Panc1 (cell line): ENCODE measurements at regions of chr2 and their contacts with region 1.

Region 1: GRCh38 chr2:102072741-102073140 is 69.8 kb upstream of the IL1R1 start:
- DNase-seq: no peak
- ATAC-seq: no peak
- H3K4me3 ChIP-seq: no peak overlapping the region
- H3K27ac ChIP-seq: no peak overlapping the region
- H3K4me1 ChIP-seq: no peaks in the 10 kb centered on the region
- H3K27me3 ChIP-seq: no peaks in the 10 kb centered on the region
- CTCF ChIP-seq: no peak

Region 2: GRCh38 chr2:102050854-102051391 is 21.8 kb before region 1 on chr2:
- CTCF ChIA-PET with region 1: no interaction called
- POLR2A ChIA-PET with region 1: no interaction called
- in situ Hi-C with region 1: no loop called
- intact Hi-C with region 1: no loop called
- DNase-seq: no peak
- ATAC-seq: no peak
- H3K4me3 ChIP-seq: no peak overlapping the region
- H3K27ac ChIP-seq: no peak overlapping the region
- H3K4me1 ChIP-seq: no peaks in the 10 kb centered on the region
- H3K27me3 ChIP-seq: peaks cover 4% of the 10 kb centered on the region; the same call in 1 of the 2 replicates
- CTCF ChIP-seq: no peak

Region 3: DNA sequence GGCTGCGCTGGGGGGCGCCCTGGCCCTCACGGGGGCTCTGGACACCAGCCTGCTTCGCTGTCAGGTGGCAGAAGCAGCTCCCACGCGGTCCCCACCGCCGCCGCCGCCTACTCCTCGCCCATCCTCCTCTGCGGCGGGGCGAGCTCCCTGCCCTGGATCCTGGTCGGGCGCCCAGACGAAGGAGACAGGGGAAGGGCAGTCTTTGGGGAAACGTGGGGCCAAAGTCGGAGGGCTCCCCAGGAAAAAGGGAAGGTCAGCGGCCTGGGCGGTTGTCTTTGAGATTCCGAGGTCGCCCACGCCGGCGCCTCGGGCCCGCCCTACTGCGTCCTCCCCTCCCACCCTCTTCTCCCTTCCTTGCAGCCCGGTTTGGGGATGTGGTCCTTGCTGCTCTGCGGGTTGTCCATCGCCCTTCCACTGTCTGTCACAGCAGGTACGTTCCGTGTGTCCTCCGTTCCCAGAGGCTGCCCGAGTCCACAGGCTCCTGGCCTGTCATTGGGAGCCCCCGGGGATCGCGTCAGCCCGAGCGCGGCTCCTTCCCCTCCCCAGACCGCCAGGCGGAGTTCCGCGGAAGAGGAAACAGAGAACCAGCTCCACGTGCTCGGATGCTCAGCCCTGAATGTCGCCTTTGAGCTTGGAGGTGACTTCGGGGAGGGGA is 114.9 kb after region 1 on chr2:
- CTCF ChIA-PET with region 1: no interaction called
- POLR2A ChIA-PET with region 1: interaction called, 10 read pairs
- in situ Hi-C with region 1: no loop called
- intact Hi-C with region 1: no loop called
- DNase-seq: no peak
- ATAC-seq: no peak
- H3K4me3 ChIP-seq: no peak overlapping the region
- H3K27ac ChIP-seq: no peak overlapping the region
- H3K4me1 ChIP-seq: no peaks in the 10 kb centered on the region
- H3K27me3 ChIP-seq: no peaks in the 10 kb centered on the region; the same call in 1 of the 2 replicates
- CTCF ChIP-seq: no peak